HEK293T (cell line): ENCODE measurements at regions of chr7 and their contacts with region 1.

Region 1: DNA sequence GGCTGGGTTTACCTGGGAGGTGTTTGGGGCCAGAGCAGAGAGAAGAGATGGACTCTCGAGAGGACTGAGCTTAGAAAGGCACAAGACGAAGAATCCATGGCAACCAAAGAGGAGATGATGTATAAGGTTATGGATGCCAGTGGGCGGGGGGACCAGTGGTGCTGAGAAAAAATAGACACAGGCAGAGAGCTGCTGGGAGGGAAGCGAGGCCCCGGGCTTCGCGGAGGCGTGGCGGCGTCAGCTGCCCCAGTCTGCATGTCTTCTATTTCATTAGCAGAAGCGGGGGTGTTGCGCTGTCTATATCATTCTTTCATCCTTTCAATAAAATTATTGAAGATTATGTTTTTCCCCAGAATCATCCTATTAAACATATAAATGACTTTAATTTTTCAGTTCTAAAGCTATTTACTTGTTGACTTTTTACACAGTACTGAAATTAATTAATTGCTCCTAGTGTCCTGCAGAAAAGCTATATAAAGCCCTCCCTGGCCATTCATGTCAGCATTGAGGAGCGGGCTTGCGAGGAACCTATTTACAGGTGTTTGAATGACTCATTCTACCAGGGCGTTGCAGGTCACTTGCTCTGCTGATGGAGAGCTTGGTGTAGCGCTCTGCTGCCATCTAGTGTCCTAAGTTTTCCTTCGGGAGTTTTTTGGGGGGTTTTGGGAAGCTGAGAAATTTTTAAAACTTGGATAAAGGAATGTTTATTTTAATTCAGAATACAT is 42.9 kb upstream of the BHLHA15 start:
- DNase-seq: peak; percentile 74

Region 2: DNA sequence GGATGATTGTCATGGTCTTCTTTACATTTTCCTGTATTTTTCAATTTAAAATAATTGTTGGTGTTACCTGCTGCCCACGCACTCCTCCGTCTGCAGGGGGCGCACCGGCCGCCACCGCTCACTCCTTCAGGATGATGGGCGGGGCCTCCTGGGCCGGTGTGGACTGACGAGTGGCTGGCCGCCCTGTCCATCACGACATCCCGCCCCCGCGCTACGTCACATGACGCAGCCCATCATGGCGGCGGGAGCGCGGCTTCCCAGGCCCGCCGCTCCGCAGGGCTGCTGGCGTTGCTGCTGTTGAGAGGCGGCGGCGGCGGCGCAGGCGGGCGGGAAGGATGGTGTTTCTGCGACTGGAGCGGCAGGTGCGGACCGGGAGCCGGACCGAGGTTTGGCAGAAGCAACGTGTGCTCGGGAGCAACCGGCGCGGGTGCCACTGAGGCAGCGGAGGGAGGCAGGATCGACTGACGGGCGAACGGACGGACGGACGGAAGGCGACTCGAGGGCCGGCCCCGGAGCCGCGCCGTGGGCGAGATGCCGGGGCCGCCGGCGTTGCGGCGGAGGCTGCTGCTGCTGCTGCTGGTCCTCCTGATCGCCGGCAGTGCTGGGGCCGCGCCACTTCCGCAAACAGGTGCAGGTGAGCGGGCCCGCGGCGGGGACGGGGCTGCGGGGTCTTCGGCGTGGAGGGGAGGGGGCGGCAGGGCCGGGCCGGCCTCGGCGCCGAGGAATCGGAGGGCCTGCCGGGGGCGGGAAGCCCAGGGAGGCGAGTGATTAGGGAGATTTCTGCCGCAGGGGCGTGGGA is 61.5 kb before region 1 on chr7 and contains the start of gene LMTK2:
- CTCF ChIA-PET with region 1: interaction called, 18 read pairs
- POLR2A ChIA-PET with region 1: no interaction called
- DNase-seq: peak; percentile 99